ENCODE measurements at regions of chr19 and their contacts with region 1.

Region 1: GRCh38 chr19:30446850-30447552 is 74.8 kb downstream of the ZNF536 start:
- DNase-seq: no peak

Region 2: GRCh38 chr19:28556371-28556770 is 1890.6 kb before region 1 on chr19:
- intact Hi-C with region 1: no loop called
- DNase-seq: no peak

Region 3: GRCh38 chr19:30387311-30388115 is 59.5 kb before region 1 on chr19:
- intact Hi-C with region 1: loop called (anchors 10 kb)
- DNase-seq: no peak